Caco-2 (cell line): ENCODE measurements at regions of chr5 and their contacts with region 1.

Region 1: GRCh38 chr5:108642167-108642906 is 105.4 kb upstream of the FER start:
- DNase-seq: peak; percentile 79
- H3K4me3 ChIP-seq: peak overlapping the region; percentile 19; the same call in 1 of the 2 replicates
- H3K4me3 Mint-ChIP-seq: peak overlapping the region; percentile 52
- H3K27ac Mint-ChIP-seq: peak overlapping the region; percentile 3
- H3K4me1 ChIP-seq: no peaks in the 10 kb centered on the region
- H3K4me1 Mint-ChIP-seq: peaks cover 11% of the 10 kb centered on the region
- H3K27me3 ChIP-seq: no peaks in the 10 kb centered on the region
- H3K27me3 Mint-ChIP-seq: no peaks in the 10 kb centered on the region
- CTCF ChIP-seq: peak; percentile 88 to 94

Region 2: GRCh38 chr5:108521841-108522506 is 120.4 kb before region 1 on chr5:
- CTCF ChIA-PET with region 1: no interaction called
- POLR2A ChIA-PET with region 1: no interaction called
- intact Hi-C with region 1: loop called (anchors 1 kb)
- DNase-seq: peak in 1 of 2 experiments; percentile 66
- H3K4me3 ChIP-seq: no peak overlapping the region
- H3K4me3 Mint-ChIP-seq: no peak overlapping the region
- H3K27ac Mint-ChIP-seq: no peak overlapping the region
- H3K4me1 ChIP-seq: peaks cover 8% of the 10 kb centered on the region
- H3K4me1 Mint-ChIP-seq: peaks cover 12% of the 10 kb centered on the region
- H3K27me3 ChIP-seq: no peaks in the 10 kb centered on the region
- H3K27me3 Mint-ChIP-seq: no peaks in the 10 kb centered on the region
- CTCF ChIP-seq: peak; percentile 71

Region 3: GRCh38 chr5:108655750-108656450 is 13.6 kb after region 1 on chr5:
- CTCF ChIA-PET with region 1: no interaction called
- POLR2A ChIA-PET with region 1: no interaction called
- intact Hi-C with region 1: no loop called
- DNase-seq: no peak
- H3K4me3 ChIP-seq: no peak overlapping the region
- H3K4me3 Mint-ChIP-seq: no peak overlapping the region
- H3K27ac Mint-ChIP-seq: no peak overlapping the region
- H3K4me1 ChIP-seq: no peaks in the 10 kb centered on the region
- H3K4me1 Mint-ChIP-seq: peaks cover 6% of the 10 kb centered on the region
- H3K27me3 ChIP-seq: no peaks in the 10 kb centered on the region
- H3K27me3 Mint-ChIP-seq: peaks cover 6% of the 10 kb centered on the region
- CTCF ChIP-seq: no peak

Region 4: DNA sequence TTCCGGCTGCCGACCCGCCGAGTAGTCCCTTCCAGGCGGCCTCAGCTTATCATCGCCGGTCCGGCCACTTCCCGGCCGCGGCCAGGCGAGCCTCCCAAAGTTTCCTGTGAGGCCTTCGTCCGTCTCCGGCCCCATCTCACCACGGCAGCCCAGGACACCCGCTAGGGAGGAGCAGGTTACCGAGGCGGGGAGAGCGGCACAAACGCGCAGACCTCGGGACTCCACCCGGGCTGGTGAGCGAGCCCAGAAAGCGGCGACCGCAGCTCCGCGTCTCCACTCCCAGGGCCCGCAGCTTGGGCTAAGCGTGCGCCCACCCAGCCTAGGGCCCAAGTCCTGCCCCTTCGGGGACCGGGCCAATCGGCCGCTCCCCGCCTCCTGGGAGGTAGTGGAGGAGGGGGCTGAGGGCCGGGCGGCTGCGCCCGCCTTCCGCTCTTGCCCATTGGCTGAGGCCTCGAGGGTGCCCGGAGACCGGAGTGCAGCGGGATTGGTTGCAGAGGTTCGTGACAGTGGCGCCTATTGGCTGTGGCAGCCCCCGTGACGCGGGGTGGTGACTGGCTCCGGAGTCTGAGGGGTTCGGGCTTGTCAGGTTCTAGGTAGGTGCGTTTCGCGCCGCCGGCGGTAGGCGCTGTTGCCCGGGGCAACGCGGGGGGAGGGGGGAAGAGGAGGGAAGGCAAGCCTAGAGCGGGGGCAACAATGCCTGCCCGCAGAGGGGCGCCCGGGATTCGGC is 106.2 kb after region 1 on chr5:
- CTCF ChIA-PET with region 1: no interaction called
- POLR2A ChIA-PET with region 1: no interaction called
- intact Hi-C with region 1: loop called (anchors 5 kb)
- DNase-seq: peak; percentile 99 to 100
- H3K4me3 ChIP-seq: peak overlapping the region; percentile 98
- H3K4me3 Mint-ChIP-seq: peak overlapping the region; percentile 90
- H3K27ac Mint-ChIP-seq: peak overlapping the region; percentile 93
- H3K4me1 ChIP-seq: peaks cover 24% of the 10 kb centered on the region
- H3K4me1 Mint-ChIP-seq: peaks cover 23% of the 10 kb centered on the region
- H3K27me3 ChIP-seq: no peaks in the 10 kb centered on the region
- H3K27me3 Mint-ChIP-seq: no peaks in the 10 kb centered on the region
- CTCF ChIP-seq: no peak

Region 5: GRCh38 chr5:108769352-108769751 is 127.0 kb after region 1 on chr5:
- CTCF ChIA-PET with region 1: no interaction called
- POLR2A ChIA-PET with region 1: no interaction called
- intact Hi-C with region 1: no loop called
- DNase-seq: no peak
- H3K4me3 ChIP-seq: no peak overlapping the region
- H3K4me3 Mint-ChIP-seq: no peak overlapping the region
- H3K27ac Mint-ChIP-seq: no peak overlapping the region
- H3K4me1 ChIP-seq: 0 out of 2 replicates have a peak, but pooled peaks cover 7% of the 10 kb centered on the region
- H3K4me1 Mint-ChIP-seq: peaks cover 14% of the 10 kb centered on the region
- H3K27me3 ChIP-seq: no peaks in the 10 kb centered on the region
- H3K27me3 Mint-ChIP-seq: no peaks in the 10 kb centered on the region
- CTCF ChIP-seq: no peak

Region 6: GRCh38 chr5:109439590-109439989 is 797.3 kb after region 1 on chr5:
- CTCF ChIA-PET with region 1: no interaction called
- POLR2A ChIA-PET with region 1: no interaction called
- intact Hi-C with region 1: loop called (anchors 1 kb)
- DNase-seq: no peak
- H3K4me3 ChIP-seq: no peak overlapping the region
- H3K4me3 Mint-ChIP-seq: no peak overlapping the region
- H3K27ac Mint-ChIP-seq: no peak overlapping the region
- H3K4me1 ChIP-seq: no peaks in the 10 kb centered on the region
- H3K4me1 Mint-ChIP-seq: no peaks in the 10 kb centered on the region
- H3K27me3 ChIP-seq: no peaks in the 10 kb centered on the region
- H3K27me3 Mint-ChIP-seq: peaks cover 2% of the 10 kb centered on the region
- CTCF ChIP-seq: no peak